Dorsolateral prefrontal cortex (tissue), 120 donors: ENCODE measurements at regions of chr1 and their contacts with region 1.

Region 1: DNA sequence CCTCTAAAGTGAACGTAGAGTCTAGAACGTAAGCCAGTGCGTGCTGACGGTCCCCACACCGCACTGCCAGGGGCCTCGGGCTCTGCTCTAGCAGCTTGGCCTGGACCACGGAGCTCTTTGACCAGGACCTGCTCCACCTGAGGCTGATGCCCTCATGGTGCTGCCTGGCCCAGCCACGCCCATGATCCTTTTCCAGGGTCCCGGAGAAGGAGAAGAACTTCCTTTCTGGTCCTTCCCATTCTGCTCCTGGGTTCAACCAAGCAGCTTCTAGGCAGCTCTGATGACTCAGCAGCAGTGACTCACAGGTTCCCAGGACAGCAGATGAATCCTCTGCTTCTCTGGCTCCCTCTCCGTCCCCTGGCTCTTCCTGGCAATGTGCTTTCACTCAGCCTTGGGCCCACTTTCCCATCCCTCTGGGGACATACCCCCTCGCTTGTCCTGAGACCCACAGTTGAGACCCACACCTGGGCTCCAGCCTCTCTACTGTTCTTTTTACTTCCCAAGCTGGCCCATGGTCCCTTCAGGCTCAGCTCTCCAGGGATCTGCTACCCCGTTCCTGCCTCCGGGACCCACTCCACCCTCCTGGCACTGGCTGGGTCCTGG is 246.3 kb upstream of the RAB4A start:
- DNase-seq: peak in 4 of 10 donors; percentile 56 to 88 (median 62)
- H3K4me3 ChIP-seq: no peak overlapping the region
- H3K27ac ChIP-seq: peak overlapping the region in 12 of 59 donors; percentile 7 to 92 (median 65)
- H3K27me3 ChIP-seq: no peaks in the 10 kb centered on the region
- CTCF ChIP-seq: no peak

Region 2: GRCh38 chr1:229059671-229060539 is 35.3 kb after region 1 on chr1:
- intact Hi-C with region 1: loop called in 1 of 2 experiments (anchors 5 kb)
- DNase-seq: no peak
- H3K4me3 ChIP-seq: peak overlapping the region in 3 of 59 donors; percentile 10 to 16 (median 11)
- H3K27ac ChIP-seq: peak overlapping the region in 24 of 59 donors; percentile 3 to 62 (median 28)
- H3K27me3 ChIP-seq: no peaks in the 10 kb centered on the region
- CTCF ChIP-seq: no peak

Region 3: GRCh38 chr1:229127301-229127700 is 102.7 kb after region 1 on chr1:
- intact Hi-C with region 1: loop called in 1 of 2 experiments (anchors 10 kb)
- DNase-seq: no peak
- H3K4me3 ChIP-seq: no peak overlapping the region
- H3K27ac ChIP-seq: peak overlapping the region in 50 of 59 donors; percentile 1 to 98 (median 68)
- H3K27me3 ChIP-seq: no peaks in the 10 kb centered on the region
- CTCF ChIP-seq: no peak